Naive thymus-derived CD4-positive, alpha-beta T cell (primary cell): ENCODE measurements at regions of chr1 and their contacts with region 1.

Region 1: GRCh38 chr1:35557292-35558063 is at the starts of genes KIAA0319L and NCDN:
- DNase-seq: peak; percentile 86 to 96 (median 94)
- ATAC-seq: peak; percentile 96
- H3K4me3 ChIP-seq: peak within 1 kb of the TSS; percentile 87
- H3K4me3 Mint-ChIP-seq: peak within 1 kb of the TSS; percentile 90 to 99 (median 96)
- H3K27ac ChIP-seq: peak within 1 kb of the TSS; percentile 77
- H3K27ac Mint-ChIP-seq: peak within 1 kb of the TSS; percentile 89 to 98 (median 93)
- H3K4me1 ChIP-seq: peaks cover 16 to 19% of the 10 kb centered on the region in 2 donors
- H3K4me1 Mint-ChIP-seq: peaks cover 40 to 69% (median 53%) of the 10 kb centered on the region in 7 donors
- H3K27me3 ChIP-seq: no peaks in the 10 kb centered on the region
- H3K27me3 Mint-ChIP-seq: no peaks in the 10 kb centered on the region
- total RNA-seq, gene KIAA0319L: 62.0 to 79.7 (median 65.6) TPM
- total RNA-seq, gene NCDN: 19.4 to 38.6 (median 26.4) TPM

Region 2: DNA sequence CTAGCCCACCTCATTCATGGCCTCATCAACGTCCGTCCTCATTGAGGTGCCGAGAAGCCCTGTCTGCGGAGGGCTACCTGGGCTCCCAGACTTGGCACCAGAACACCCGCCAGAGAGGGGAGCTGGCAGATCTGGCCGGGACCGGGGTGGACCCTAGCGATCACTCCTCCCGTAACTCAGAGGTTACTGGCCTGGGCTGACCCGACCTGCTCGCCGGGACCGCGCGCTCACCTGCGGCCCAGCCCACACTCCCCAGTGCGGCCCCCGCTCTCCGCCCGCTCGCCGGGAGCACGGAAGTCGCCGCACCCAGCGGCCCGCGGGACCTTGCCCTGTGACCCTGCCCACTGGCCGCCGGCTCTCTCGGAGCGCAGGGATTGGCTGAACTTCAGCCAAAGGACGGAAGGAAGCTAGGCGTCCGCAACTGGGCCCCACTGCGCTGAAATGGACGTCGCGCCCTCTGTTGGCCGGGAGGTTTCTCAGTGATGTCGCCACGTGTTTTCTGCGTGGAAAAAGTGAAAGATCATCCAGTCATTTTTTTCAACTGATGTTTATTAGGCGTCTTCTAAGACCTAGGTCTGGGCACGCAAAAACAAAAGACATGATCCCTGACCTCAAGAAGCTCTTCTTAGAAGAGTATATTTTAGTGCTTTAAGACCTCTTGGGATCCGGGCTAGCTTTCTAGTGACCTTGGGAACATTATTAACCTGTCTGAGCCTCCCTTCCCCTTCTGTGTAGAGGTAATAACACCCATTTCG is 697.9 kb before region 1 on chr1 and contains the start of gene SMIM12:
- CTCF ChIA-PET with region 1: no interaction called
- POLR2A ChIA-PET with region 1: no interaction called
- intact Hi-C with region 1: loop called in 1 of 2 experiments (anchors 2 kb)
- DNase-seq: peak; percentile 69 to 92 (median 75)
- ATAC-seq: peak; percentile 99
- H3K4me3 ChIP-seq: peak within 1 kb of the TSS; percentile 72
- H3K4me3 Mint-ChIP-seq: peak within 1 kb of the TSS; percentile 85 to 100 (median 95)
- H3K27ac ChIP-seq: peak within 1 kb of the TSS; percentile 93
- H3K27ac Mint-ChIP-seq: peak within 1 kb of the TSS; percentile 90 to 99 (median 96)
- H3K4me1 ChIP-seq: peaks cover 38 to 43% of the 10 kb centered on the region in 2 donors
- H3K4me1 Mint-ChIP-seq: peaks cover 39 to 66% (median 63%) of the 10 kb centered on the region in 7 donors
- H3K27me3 ChIP-seq: no peaks in the 10 kb centered on the region
- H3K27me3 Mint-ChIP-seq: no peaks in the 10 kb centered on the region
- total RNA-seq, gene SMIM12: 29.1 to 46.4 (median 38.2) TPM

Region 3: GRCh38 chr1:35268282-35269200 is 288.9 kb before region 1 on chr1 and contains the start of gene ZMYM4:
- CTCF ChIA-PET with region 1: no interaction called
- POLR2A ChIA-PET with region 1: no interaction called
- intact Hi-C with region 1: loop called in 1 of 2 experiments (anchors 1 kb)
- DNase-seq: peak; percentile 67 to 91 (median 87)
- ATAC-seq: peak; percentile 96
- H3K4me3 ChIP-seq: peak within 1 kb of the TSS; percentile 58
- H3K4me3 Mint-ChIP-seq: peak within 1 kb of the TSS; percentile 78 to 98 (median 90)
- H3K27ac ChIP-seq: peak within 1 kb of the TSS; percentile 88
- H3K27ac Mint-ChIP-seq: peak within 1 kb of the TSS; percentile 80 to 99 (median 93)
- H3K4me1 ChIP-seq: peaks cover 6 to 20% of the 10 kb centered on the region in 2 donors
- H3K4me1 Mint-ChIP-seq: peaks cover 22 to 44% (median 40%) of the 10 kb centered on the region in 7 donors
- H3K27me3 ChIP-seq: no peaks in the 10 kb centered on the region
- H3K27me3 Mint-ChIP-seq: peaks cover 0 to 5% (median 0%) of the 10 kb centered on the region in 5 donors
- total RNA-seq, gene ZMYM4: 32.1 to 52.9 (median 45.6) TPM

Region 4: DNA sequence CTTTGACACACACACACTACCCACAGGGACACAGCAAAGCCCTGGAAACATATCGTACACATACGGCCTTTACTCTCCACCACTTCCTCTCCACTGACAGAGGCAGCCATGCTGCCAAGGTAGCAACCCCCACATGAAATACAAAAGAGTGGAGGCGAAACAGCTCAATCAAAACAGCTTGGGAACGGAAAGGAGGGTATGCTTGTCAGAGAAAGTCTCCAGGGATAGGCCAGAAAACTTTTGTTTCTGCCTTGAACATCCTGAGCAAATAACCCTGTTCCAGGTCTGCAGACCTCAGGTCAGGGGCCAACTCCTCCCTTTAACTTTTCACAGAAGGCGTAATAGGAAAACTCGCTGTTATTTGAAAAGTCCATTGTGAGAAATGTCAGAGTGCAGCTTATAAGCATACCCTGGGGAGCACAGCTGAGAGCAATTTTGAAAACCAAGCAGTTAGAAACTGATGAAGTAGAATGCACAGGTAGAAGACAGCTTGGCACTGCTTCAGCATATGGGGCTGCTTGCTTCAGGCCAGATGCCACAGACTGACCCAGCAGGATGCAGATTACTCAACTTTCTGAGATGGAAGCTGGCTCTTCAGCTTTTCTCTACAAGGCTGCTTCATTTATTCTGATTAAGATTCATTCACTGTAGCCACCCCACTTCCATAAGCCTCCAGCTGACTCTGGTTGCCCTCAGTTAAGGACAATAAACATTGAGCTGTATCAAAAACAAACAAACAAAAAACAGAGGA is 18.2 kb before region 1 on chr1:
- CTCF ChIA-PET with region 1: interaction called, 3 read pairs
- POLR2A ChIA-PET with region 1: interaction called, 19 read pairs
- intact Hi-C with region 1: loop called (anchors 1 kb)
- DNase-seq: peak in 8 of 9 donors; percentile 30 to 88 (median 79)
- ATAC-seq: peak; percentile 90
- H3K4me3 ChIP-seq: peak overlapping the region; percentile 29
- H3K4me3 Mint-ChIP-seq: peak overlapping the region; percentile 54 to 93 (median 82)
- H3K27ac ChIP-seq: peak overlapping the region; percentile 65
- H3K27ac Mint-ChIP-seq: peak overlapping the region; percentile 89 to 100 (median 93)
- H3K4me1 ChIP-seq: peaks cover 35 to 55% of the 10 kb centered on the region in 2 donors
- H3K4me1 Mint-ChIP-seq: peaks cover 53 to 94% (median 87%) of the 10 kb centered on the region in 7 donors
- H3K27me3 ChIP-seq: no peaks in the 10 kb centered on the region
- H3K27me3 Mint-ChIP-seq: no peaks in the 10 kb centered on the region

Region 5: GRCh38 chr1:35641233-35641866 is 83.9 kb after region 1 on chr1 and contains the start of gene PSMB2:
- CTCF ChIA-PET with region 1: no interaction called
- POLR2A ChIA-PET with region 1: interaction called, 4 read pairs
- intact Hi-C with region 1: loop called (anchors 1 kb)
- DNase-seq: peak; percentile 89 to 96 (median 95)
- ATAC-seq: peak; percentile 97
- H3K4me3 ChIP-seq: peak within 1 kb of the TSS; percentile 89
- H3K4me3 Mint-ChIP-seq: peak within 1 kb of the TSS; percentile 97 to 100 (median 100)
- H3K27ac ChIP-seq: peak within 1 kb of the TSS; percentile 92
- H3K27ac Mint-ChIP-seq: peak within 1 kb of the TSS; percentile 98 to 100 (median 99)
- H3K4me1 ChIP-seq: peaks cover 18 to 19% of the 10 kb centered on the region in 2 donors
- H3K4me1 Mint-ChIP-seq: peaks cover 16 to 54% (median 42%) of the 10 kb centered on the region in 7 donors
- H3K27me3 ChIP-seq: no peaks in the 10 kb centered on the region
- H3K27me3 Mint-ChIP-seq: peaks cover 12 to 44% (median 30%) of the 10 kb centered on the region in 5 donors
- total RNA-seq, gene PSMB2: 20.4 to 93.5 (median 23.5) TPM

Region 6: DNA sequence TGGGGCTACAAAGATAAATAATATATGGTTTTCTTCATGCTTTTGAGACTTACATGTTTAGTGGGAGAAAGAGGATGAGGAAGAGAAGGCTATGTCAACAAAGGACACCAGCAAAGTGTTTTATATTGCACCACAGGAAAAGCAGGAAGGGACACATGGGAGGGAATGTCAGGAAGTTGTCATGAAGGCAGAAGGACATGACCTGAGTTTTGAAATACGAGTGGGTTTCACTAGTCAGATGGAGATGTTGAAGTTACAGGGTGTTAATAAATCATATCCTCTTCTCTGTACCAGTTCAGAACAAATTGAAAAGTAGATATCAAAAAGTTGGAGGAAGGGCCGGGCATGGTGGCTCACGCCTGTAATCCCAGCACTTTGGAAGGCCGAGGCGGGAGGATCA is 307.3 kb after region 1 on chr1:
- CTCF ChIA-PET with region 1: no interaction called
- POLR2A ChIA-PET with region 1: no interaction called
- intact Hi-C with region 1: no loop called
- DNase-seq: no peak
- ATAC-seq: no peak
- H3K4me3 ChIP-seq: no peak overlapping the region
- H3K4me3 Mint-ChIP-seq: no peak overlapping the region
- H3K27ac ChIP-seq: no peak overlapping the region
- H3K27ac Mint-ChIP-seq: peak overlapping the region in 1 of 9 donors; percentile 32
- H3K4me1 ChIP-seq: no peaks in the 10 kb centered on the region
- H3K4me1 Mint-ChIP-seq: peaks cover 0 to 5% (median 0%) of the 10 kb centered on the region in 7 donors
- H3K27me3 ChIP-seq: no peaks in the 10 kb centered on the region
- H3K27me3 Mint-ChIP-seq: peaks cover 0 to 12% (median 0%) of the 10 kb centered on the region in 5 donors

Region 7: GRCh38 chr1:35930593-35931445 is 373.3 kb after region 1 on chr1 and contains the start of gene AGO3:
- CTCF ChIA-PET with region 1: no interaction called
- POLR2A ChIA-PET with region 1: no interaction called
- intact Hi-C with region 1: loop called in 1 of 2 experiments (anchors 2 kb)
- DNase-seq: peak; percentile 79 to 90 (median 86)
- ATAC-seq: peak; percentile 91
- H3K4me3 ChIP-seq: peak within 1 kb of the TSS; percentile 93
- H3K4me3 Mint-ChIP-seq: peak within 1 kb of the TSS; percentile 84 to 97 (median 92)
- H3K27ac ChIP-seq: peak within 1 kb of the TSS; percentile 95
- H3K27ac Mint-ChIP-seq: peak within 1 kb of the TSS; percentile 94 to 98 (median 96)
- H3K4me1 ChIP-seq: peaks cover 21 to 22% of the 10 kb centered on the region in 2 donors
- H3K4me1 Mint-ChIP-seq: peaks cover 14 to 46% (median 44%) of the 10 kb centered on the region in 7 donors
- H3K27me3 ChIP-seq: no peaks in the 10 kb centered on the region
- H3K27me3 Mint-ChIP-seq: no peaks in the 10 kb centered on the region
- total RNA-seq, gene AGO3: 27.2 to 49.2 (median 39.4) TPM